Left ventricle myocardium superior (tissue), 1 donor: ENCODE measurements at regions of chr6 and their contacts with region 1.

Region 1: GRCh38 chr6:80088637-80089036 is 17.8 kb upstream of the BCKDHB start:
- DNase-seq: no peak
- ATAC-seq: no peak

Region 2: DNA sequence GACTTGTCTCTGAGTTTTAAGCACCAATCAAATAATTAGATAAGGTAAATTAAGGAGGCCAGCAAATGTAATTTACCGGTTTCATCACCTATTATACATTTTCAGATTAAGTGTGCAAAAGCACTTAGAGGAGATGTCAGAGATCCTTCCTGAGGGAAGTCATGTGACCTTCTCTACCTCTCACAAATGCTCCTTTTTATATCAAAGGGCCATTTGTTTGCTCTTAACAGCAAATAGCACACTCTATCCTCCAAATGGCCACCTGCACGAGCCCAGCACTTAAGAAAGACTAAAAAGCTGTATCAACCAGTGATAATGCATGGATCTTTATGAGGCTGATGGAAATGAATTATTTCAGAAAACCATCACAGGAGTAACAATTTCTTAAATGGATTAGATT is 290.7 kb before region 1 on chr6:
- intact Hi-C with region 1: loop called (anchors 10 kb)
- DNase-seq: no peak
- ATAC-seq: no peak

Region 3: GRCh38 chr6:80605165-80605989 is 516.7 kb after region 1 on chr6:
- intact Hi-C with region 1: no loop called
- DNase-seq: no peak
- ATAC-seq: peak; percentile 58